ENCODE measurements at regions of chr22 and their contacts with region 1.

Region 1: DNA sequence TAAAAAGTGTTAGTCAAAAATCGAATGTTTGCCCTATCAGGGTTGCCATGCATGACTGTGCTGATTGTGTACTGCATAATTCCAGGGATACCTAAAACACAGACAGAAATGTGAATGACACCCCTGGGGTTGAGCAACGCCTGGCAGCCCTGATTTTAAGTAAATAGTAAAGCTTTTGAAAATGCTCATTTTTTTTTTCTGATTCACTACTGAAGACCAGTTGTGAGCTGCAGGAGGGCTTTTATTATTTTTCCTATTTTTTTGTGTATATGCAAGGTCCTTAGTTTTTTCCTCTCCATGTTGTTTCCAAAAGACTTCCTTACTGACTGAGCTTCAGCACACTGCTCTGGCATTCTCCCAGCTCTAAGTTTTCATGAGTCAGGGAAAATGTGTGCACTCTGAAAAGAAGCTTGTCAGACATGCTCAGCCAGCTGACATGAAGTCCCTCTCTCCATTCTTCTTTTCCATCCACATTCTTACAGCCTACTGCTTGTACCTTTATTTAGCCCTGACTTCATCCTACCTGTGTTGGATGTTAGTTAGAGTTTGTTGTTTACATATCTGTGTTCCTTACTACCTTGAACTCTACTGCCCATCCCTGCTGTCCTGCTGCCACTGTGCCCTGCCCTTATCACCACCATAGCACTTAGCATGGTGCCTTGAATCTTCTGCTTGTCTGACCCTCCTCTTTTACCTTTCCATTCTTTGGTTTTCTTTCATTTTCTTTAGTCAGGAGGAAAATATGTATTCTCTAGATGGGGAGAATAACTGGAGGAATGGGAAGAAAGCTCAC is 79.5 kb downstream of the HORMAD2 start:
- DNase-seq: peak; percentile 18
- ATAC-seq: peak; percentile 39
- H3K4me3 Mint-ChIP-seq: no peak overlapping the region
- H3K27ac Mint-ChIP-seq: peak overlapping the region; percentile 81
- H3K4me1 Mint-ChIP-seq: peaks cover 48% of the 10 kb centered on the region
- H3K27me3 Mint-ChIP-seq: peaks cover 4% of the 10 kb centered on the region

Region 2: GRCh38 chr22:30129636-30130035 is 30.1 kb before region 1 on chr22:
- CTCF ChIA-PET with region 1: interaction called, 3 read pairs
- POLR2A ChIA-PET with region 1: no interaction called
- intact Hi-C with region 1: loop called in 1 of 2 experiments (anchors 2 kb)
- DNase-seq: no peak
- ATAC-seq: no peak
- H3K4me3 Mint-ChIP-seq: no peak overlapping the region
- H3K27ac Mint-ChIP-seq: no peak overlapping the region
- H3K4me1 Mint-ChIP-seq: peaks cover 11% of the 10 kb centered on the region
- H3K27me3 Mint-ChIP-seq: no peaks in the 10 kb centered on the region

Region 3: GRCh38 chr22:30178181-30179126 is 18.7 kb after region 1 on chr22:
- CTCF ChIA-PET with region 1: interaction called, 17 read pairs
- POLR2A ChIA-PET with region 1: no interaction called
- intact Hi-C with region 1: loop called (anchors 2 kb)
- DNase-seq: peak; percentile 73
- ATAC-seq: peak; percentile 88
- H3K4me3 Mint-ChIP-seq: peak overlapping the region; percentile 18
- H3K27ac Mint-ChIP-seq: peak overlapping the region; percentile 83
- H3K4me1 Mint-ChIP-seq: peaks cover 69% of the 10 kb centered on the region
- H3K27me3 Mint-ChIP-seq: no peaks in the 10 kb centered on the region

Measured in activated CD4-positive, alpha-beta T cell treated with anti-CD3 and anti-CD28 coated beads for 36 hours (primary cell).